ENCODE measurements at regions of chr1 and their contacts with region 1.

Region 1: GRCh38 chr1:220300442-220301121 is 28.3 kb upstream of the RAB3GAP2 start:
- DNase-seq: peak; percentile 91
- H3K4me3 Mint-ChIP-seq: peak overlapping the region; percentile 25
- H3K27ac Mint-ChIP-seq: peak overlapping the region; percentile 85
- H3K4me1 Mint-ChIP-seq: peaks cover 13% of the 10 kb centered on the region
- H3K27me3 Mint-ChIP-seq: no peaks in the 10 kb centered on the region
- CTCF ChIP-seq: no peak

Region 2: GRCh38 chr1:220315070-220315839 is 14.7 kb after region 1 on chr1:
- CTCF ChIA-PET with region 1: interaction called, 35 read pairs
- POLR2A ChIA-PET with region 1: interaction called, 10 read pairs
- intact Hi-C with region 1: no loop called
- DNase-seq: peak; percentile 62
- H3K4me3 Mint-ChIP-seq: no peak overlapping the region
- H3K27ac Mint-ChIP-seq: no peak overlapping the region
- H3K4me1 Mint-ChIP-seq: peaks cover 5% of the 10 kb centered on the region
- H3K27me3 Mint-ChIP-seq: no peaks in the 10 kb centered on the region
- CTCF ChIP-seq: no peak

Region 3: DNA sequence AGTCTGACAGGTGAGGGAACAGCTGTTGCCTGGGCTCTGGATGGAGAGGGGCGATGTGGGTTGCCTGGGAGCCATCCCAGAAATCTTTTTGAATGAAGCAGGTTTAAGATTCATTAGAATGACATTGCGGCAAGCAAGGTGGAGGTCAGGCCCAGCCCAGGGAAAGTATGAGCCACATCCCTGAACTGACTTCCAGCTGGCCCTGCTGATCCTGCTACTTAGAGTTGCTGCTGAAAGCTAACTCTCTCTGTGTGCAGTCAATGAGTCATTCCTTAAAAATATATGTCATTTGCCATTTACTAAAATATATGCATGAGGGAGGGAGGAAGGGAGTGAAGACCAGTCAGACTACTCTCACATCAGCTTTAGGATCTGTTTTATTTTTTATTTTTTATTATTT is 26.0 kb after region 1 on chr1:
- CTCF ChIA-PET with region 1: interaction called, 12 read pairs
- POLR2A ChIA-PET with region 1: interaction called, 17 read pairs
- intact Hi-C with region 1: no loop called
- DNase-seq: peak; percentile 57
- H3K4me3 Mint-ChIP-seq: no peak overlapping the region
- H3K27ac Mint-ChIP-seq: peak overlapping the region; percentile 11
- H3K4me1 Mint-ChIP-seq: peaks cover 8% of the 10 kb centered on the region
- H3K27me3 Mint-ChIP-seq: no peaks in the 10 kb centered on the region
- CTCF ChIP-seq: no peak

Region 4: GRCh38 chr1:220370031-220370700 is 69.6 kb after region 1 on chr1:
- CTCF ChIA-PET with region 1: interaction called, 45 read pairs
- POLR2A ChIA-PET with region 1: interaction called, 3 read pairs
- intact Hi-C with region 1: loop called (anchors 1 kb)
- DNase-seq: peak; percentile 98
- H3K4me3 Mint-ChIP-seq: peak overlapping the region; percentile 6
- H3K27ac Mint-ChIP-seq: peak overlapping the region; percentile 65
- H3K4me1 Mint-ChIP-seq: peaks cover 28% of the 10 kb centered on the region
- H3K27me3 Mint-ChIP-seq: no peaks in the 10 kb centered on the region
- CTCF ChIP-seq: no peak

Region 5: DNA sequence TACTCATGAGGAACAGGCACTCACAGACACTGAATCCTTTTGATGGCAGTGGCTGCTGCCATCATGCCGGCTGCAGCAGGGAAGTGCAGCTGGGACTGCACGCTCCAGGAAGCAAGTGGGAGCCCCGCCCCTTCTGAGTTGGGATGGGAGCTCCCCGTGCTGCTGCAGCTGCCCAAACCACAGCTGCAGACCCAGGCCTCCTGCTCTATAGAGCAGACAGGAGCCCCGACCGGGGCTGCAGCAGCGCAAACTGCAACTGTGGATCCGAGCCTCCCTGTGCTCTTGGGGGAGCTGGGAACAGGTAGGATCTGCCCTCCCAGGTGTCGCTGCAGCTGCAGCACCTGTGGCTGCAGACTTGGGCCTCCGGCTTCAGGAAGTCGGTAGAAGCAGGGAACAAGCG is 162.2 kb after region 1 on chr1:
- CTCF ChIA-PET with region 1: no interaction called
- POLR2A ChIA-PET with region 1: no interaction called
- intact Hi-C with region 1: no loop called
- DNase-seq: no peak
- H3K4me3 Mint-ChIP-seq: no peak overlapping the region
- H3K27ac Mint-ChIP-seq: no peak overlapping the region
- H3K4me1 Mint-ChIP-seq: peaks cover 11% of the 10 kb centered on the region
- H3K27me3 Mint-ChIP-seq: no peaks in the 10 kb centered on the region
- CTCF ChIP-seq: no peak

Measured in MCF 10A (cell line).